Activated T-helper 2 cell treated with anti-CD3 and anti-CD28 coated beads, Interferon-gamma antibody, Interleukin-2, Interleukin-4, amounts not matched to agents 10 μg/mL and 5 μg/mL and 100 μg/mL, durations not matched to agents 14 hours and 24 hours and 36 hours (primary cell): ENCODE measurements at regions of chr9 and their contacts with region 1.

Region 1: GRCh38 chr9:109974143-109974917 is 194.3 kb downstream of the PALM2AKAP2 start:
- DNase-seq: peak; percentile 63
- H3K4me3 Mint-ChIP-seq: no peak overlapping the region
- H3K27ac Mint-ChIP-seq: peak overlapping the region; percentile 62
- H3K4me1 Mint-ChIP-seq: peaks cover 78% of the 10 kb centered on the region
- H3K27me3 Mint-ChIP-seq: no peaks in the 10 kb centered on the region

Region 2: DNA sequence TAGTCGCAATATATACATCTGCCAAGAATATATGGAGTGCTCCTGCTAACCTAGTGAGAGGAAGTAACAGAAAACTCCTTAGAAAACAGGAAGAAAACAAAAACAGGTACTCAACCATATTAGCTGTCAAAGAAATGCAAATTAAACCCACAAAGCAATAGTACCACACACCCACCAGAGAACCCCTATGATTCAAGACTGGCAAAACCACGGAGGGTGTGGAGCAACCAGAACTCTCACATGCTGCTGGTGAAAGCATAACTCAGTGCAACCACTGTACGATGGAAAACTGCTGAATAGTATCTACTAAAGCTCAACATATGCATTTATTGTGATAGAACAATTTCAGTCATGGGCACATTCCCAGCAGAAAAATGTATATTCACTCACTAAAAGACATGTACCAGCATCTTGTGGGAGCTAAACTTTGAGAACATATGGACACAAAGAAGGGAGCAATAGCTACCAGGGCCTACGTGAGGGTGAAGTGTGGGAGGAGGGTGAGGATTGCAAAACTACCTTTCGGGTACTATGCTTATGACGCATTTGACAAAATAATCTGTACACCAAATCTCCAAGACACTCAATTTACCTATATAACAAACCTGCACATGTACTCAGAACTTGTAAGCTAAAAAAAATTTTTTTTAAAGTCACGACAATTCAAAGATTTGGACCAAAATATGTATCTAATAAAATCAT is 510.3 kb before region 1 on chr9:
- intact Hi-C with region 1: loop called (anchors 2 kb)
- DNase-seq: no peak
- H3K4me3 Mint-ChIP-seq: peak overlapping the region; percentile 31
- H3K27ac Mint-ChIP-seq: peak overlapping the region; percentile 93
- H3K4me1 Mint-ChIP-seq: peaks cover 68% of the 10 kb centered on the region
- H3K27me3 Mint-ChIP-seq: peaks cover 3% of the 10 kb centered on the region

Region 3: GRCh38 chr9:109934857-109935215 is 39.5 kb before region 1 on chr9:
- intact Hi-C with region 1: loop called (anchors 1 kb)
- DNase-seq: no peak
- H3K4me3 Mint-ChIP-seq: no peak overlapping the region
- H3K27ac Mint-ChIP-seq: peak overlapping the region; percentile 84
- H3K4me1 Mint-ChIP-seq: peaks cover 50% of the 10 kb centered on the region
- H3K27me3 Mint-ChIP-seq: no peaks in the 10 kb centered on the region

Region 4: GRCh38 chr9:109986521-109986991 is 12.2 kb after region 1 on chr9:
- intact Hi-C with region 1: loop called (anchors 1 kb)
- DNase-seq: no peak
- H3K4me3 Mint-ChIP-seq: no peak overlapping the region
- H3K27ac Mint-ChIP-seq: peak overlapping the region; percentile 76
- H3K4me1 Mint-ChIP-seq: peaks cover 17% of the 10 kb centered on the region
- H3K27me3 Mint-ChIP-seq: no peaks in the 10 kb centered on the region

Region 5: GRCh38 chr9:110029429-110029955 is 55.2 kb after region 1 on chr9:
- intact Hi-C with region 1: loop called (anchors 2 kb)
- DNase-seq: no peak
- H3K4me3 Mint-ChIP-seq: no peak overlapping the region
- H3K27ac Mint-ChIP-seq: peak overlapping the region; percentile 15
- H3K4me1 Mint-ChIP-seq: peaks cover 40% of the 10 kb centered on the region
- H3K27me3 Mint-ChIP-seq: no peaks in the 10 kb centered on the region

Region 6: GRCh38 chr9:110069326-110070248 is 95.3 kb after region 1 on chr9:
- intact Hi-C with region 1: no loop called
- DNase-seq: no peak
- H3K4me3 Mint-ChIP-seq: no peak overlapping the region
- H3K27ac Mint-ChIP-seq: peak overlapping the region; percentile 70
- H3K4me1 Mint-ChIP-seq: peaks cover 74% of the 10 kb centered on the region
- H3K27me3 Mint-ChIP-seq: no peaks in the 10 kb centered on the region

Region 7: GRCh38 chr9:110152704-110153374 is 178.5 kb after region 1 on chr9:
- intact Hi-C with region 1: loop called (anchors 1 kb)
- DNase-seq: no peak
- H3K4me3 Mint-ChIP-seq: peak overlapping the region; percentile 37
- H3K27ac Mint-ChIP-seq: peak overlapping the region; percentile 77
- H3K4me1 Mint-ChIP-seq: peaks cover 95% of the 10 kb centered on the region
- H3K27me3 Mint-ChIP-seq: no peaks in the 10 kb centered on the region